ENCODE measurements at regions of chr6 and their contacts with region 1.

Region 1: DNA sequence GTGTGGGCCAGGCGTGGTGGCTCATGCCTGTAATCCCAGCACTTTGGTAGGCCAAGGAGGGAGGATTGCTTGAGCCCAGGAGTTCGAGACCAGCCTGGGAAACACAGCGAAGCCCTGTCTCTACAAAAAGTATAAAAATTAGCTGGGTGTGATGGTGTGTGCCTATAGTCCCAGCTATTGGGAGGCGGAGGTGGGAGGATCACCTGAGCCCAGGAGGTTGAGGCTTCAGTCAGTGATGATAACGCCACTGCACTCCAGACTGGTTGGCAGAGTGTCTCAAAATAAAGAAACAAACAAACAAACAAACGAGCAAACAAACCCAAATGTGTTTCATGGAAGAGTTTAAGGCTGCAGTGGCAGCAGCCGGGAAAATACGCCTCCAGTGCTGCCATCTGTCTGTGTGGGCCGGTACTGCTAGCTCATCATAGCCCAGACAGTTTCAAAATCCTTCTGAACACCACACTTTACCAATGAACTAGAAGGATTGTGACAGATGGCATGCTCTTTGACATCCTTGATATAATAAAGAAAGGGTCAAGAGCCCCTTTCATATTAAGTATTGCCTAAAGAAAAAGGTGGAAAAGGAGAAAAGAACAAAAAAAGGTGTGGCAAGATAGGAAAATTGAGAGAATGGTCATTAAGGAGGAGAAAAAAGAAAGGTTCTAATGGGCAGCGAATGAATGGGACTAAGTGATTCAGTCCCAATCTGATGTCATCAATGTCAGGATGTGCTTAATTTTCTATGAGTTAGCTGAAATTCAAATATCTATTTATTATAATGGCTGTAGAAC is 298.6 kb downstream of the SYNE1 start:
- DNase-seq: peak; percentile 28 to 79 (median 57)
- ATAC-seq: peak; percentile 82
- H3K4me3 ChIP-seq: no peak overlapping the region
- H3K4me3 Mint-ChIP-seq: no peak overlapping the region
- H3K27ac ChIP-seq: no peak overlapping the region
- H3K27ac Mint-ChIP-seq: no peak overlapping the region
- H3K4me1 ChIP-seq: peaks cover 5% of the 10 kb centered on the region
- H3K4me1 Mint-ChIP-seq: no peaks in the 10 kb centered on the region
- H3K27me3 ChIP-seq: no peaks in the 10 kb centered on the region
- H3K27me3 Mint-ChIP-seq: no peaks in the 10 kb centered on the region
- CTCF ChIP-seq: peak; percentile 95

Region 2: DNA sequence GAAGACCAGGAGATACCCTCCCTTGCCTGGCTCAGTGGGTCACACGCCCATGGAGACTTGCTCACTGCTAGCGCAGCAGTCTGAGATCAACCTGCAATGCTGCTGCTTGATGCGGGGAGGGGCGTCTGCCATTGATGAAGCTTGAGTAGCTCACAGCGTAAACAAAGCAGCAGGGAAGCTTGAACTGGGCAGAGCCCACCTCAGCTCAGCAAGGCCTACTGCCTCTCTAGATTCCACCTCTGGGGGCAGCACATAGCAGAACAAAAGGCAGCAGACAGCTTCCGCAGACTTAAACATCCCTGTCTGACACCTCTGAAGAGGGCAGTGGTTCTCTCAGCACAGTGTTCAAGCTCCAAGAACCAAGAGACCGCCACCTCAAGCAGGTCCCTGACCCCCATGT is 259.7 kb before region 1 on chr6:
- CTCF ChIA-PET with region 1: no interaction called
- POLR2A ChIA-PET with region 1: no interaction called
- intact Hi-C with region 1: no loop called
- DNase-seq: no peak
- ATAC-seq: no peak
- H3K4me3 ChIP-seq: no peak overlapping the region
- H3K4me3 Mint-ChIP-seq: no peak overlapping the region
- H3K27ac ChIP-seq: no peak overlapping the region
- H3K27ac Mint-ChIP-seq: no peak overlapping the region
- H3K4me1 ChIP-seq: no peaks in the 10 kb centered on the region
- H3K4me1 Mint-ChIP-seq: no peaks in the 10 kb centered on the region
- H3K27me3 ChIP-seq: no peaks in the 10 kb centered on the region
- H3K27me3 Mint-ChIP-seq: peaks cover 5% of the 10 kb centered on the region
- CTCF ChIP-seq: no peak

Region 3: GRCh38 chr6:152309648-152310047 is 28.9 kb before region 1 on chr6:
- CTCF ChIA-PET with region 1: interaction called, 14 read pairs
- POLR2A ChIA-PET with region 1: interaction called, 6 read pairs
- intact Hi-C with region 1: no loop called
- DNase-seq: peak; percentile 46 to 87 (median 72)
- ATAC-seq: peak; percentile 98
- H3K4me3 ChIP-seq: no peak overlapping the region
- H3K4me3 Mint-ChIP-seq: peak overlapping the region; percentile 36
- H3K27ac ChIP-seq: no peak overlapping the region
- H3K27ac Mint-ChIP-seq: peak overlapping the region; percentile 35
- H3K4me1 ChIP-seq: peaks cover 16% of the 10 kb centered on the region
- H3K4me1 Mint-ChIP-seq: peaks cover 36% of the 10 kb centered on the region
- H3K27me3 ChIP-seq: no peaks in the 10 kb centered on the region
- H3K27me3 Mint-ChIP-seq: no peaks in the 10 kb centered on the region
- CTCF ChIP-seq: no peak

Region 4: GRCh38 chr6:152316024-152316423 is 22.5 kb before region 1 on chr6:
- CTCF ChIA-PET with region 1: interaction called, 14 read pairs
- POLR2A ChIA-PET with region 1: interaction called, 5 read pairs
- intact Hi-C with region 1: no loop called
- DNase-seq: peak in 1 of 14 experiments; percentile 42
- ATAC-seq: no peak
- H3K4me3 ChIP-seq: no peak overlapping the region
- H3K4me3 Mint-ChIP-seq: no peak overlapping the region
- H3K27ac ChIP-seq: no peak overlapping the region
- H3K27ac Mint-ChIP-seq: no peak overlapping the region
- H3K4me1 ChIP-seq: no peaks in the 10 kb centered on the region
- H3K4me1 Mint-ChIP-seq: peaks cover 6% of the 10 kb centered on the region
- H3K27me3 ChIP-seq: no peaks in the 10 kb centered on the region
- H3K27me3 Mint-ChIP-seq: peaks cover 10% of the 10 kb centered on the region
- CTCF ChIP-seq: no peak

Measured in CD4-positive, alpha-beta T cell (primary cell).